Esophagus squamous epithelium (tissue), 5 donors: ENCODE measurements at regions of chr12 and their contacts with region 1.

Region 1: GRCh38 chr12:125178222-125178621 is 113.0 kb downstream of the AACS start:
- DNase-seq: no peak
- H3K4me3 ChIP-seq: no peak overlapping the region
- H3K27ac ChIP-seq: no peak overlapping the region
- H3K4me1 ChIP-seq: peaks cover under 1 to 2% (median under 1%) of the 10 kb centered on the region in 3 donors
- H3K27me3 ChIP-seq: peaks cover 0 to 80% (median 0%) of the 10 kb centered on the region in 4 donors
- CTCF ChIP-seq: no peak
- POLR2A ChIP-seq: no peak

Region 2: DNA sequence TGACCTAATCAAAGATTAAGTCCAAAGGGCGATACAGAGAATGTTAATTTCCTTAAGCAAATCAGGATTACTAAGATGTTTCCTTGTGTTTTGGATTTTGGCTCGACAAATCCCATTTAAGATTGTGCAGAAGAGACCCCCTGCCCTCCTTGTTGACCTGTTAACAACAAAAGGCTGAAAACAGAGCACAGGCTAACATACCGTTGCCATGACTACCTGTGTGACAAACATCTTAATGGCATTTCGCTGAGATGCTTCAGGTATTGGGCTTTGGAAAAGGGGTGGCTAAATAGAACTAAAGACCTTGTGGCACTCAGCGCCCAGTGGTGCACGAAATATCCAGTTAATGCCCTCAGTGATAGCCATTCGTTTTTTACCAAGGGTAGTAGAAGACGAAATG is 1556.5 kb after region 1 on chr12:
- intact Hi-C with region 1: loop called (anchors 10 kb)
- DNase-seq: no peak
- H3K4me3 ChIP-seq: no peak overlapping the region
- H3K27ac ChIP-seq: no peak overlapping the region
- H3K4me1 ChIP-seq: no peaks in the 10 kb centered on the region
- H3K27me3 ChIP-seq: peaks cover 0 to 1% (median 0%) of the 10 kb centered on the region in 4 donors
- CTCF ChIP-seq: no peak
- POLR2A ChIP-seq: no peak